Posterior vena cava (tissue), 2 donors: ENCODE measurements at regions of chr17 and their contacts with region 1.

Region 1: GRCh38 chr17:36894925-36895324 is 42.4 kb upstream of the LHX1 start:
- DNase-seq: no peak

Region 2: DNA sequence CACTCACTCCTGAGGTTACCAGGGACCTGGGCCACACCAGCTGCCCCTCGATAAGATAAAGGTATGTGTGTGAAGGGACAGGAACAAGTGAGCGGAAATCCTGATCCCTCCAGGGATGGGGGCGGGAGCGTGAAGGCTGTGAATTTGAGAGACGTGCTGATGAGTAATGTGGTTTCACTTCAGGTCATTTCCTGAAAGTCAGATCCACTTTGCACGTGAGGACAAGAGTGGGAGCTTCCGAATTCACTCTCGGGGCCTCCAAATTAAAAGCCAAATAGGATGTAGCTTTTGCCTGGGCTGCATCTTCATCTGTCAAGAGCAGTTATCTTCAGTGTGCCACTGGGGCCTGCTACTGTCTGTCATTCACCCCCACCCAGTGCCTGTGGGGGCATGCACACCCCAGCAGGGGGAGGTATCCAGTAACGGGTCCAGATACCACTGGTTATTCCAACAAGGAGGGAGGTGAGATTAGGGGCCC is 45.0 kb before region 1 on chr17:
- intact Hi-C with region 1: no loop called
- DNase-seq: peak; percentile 71

Region 3: DNA sequence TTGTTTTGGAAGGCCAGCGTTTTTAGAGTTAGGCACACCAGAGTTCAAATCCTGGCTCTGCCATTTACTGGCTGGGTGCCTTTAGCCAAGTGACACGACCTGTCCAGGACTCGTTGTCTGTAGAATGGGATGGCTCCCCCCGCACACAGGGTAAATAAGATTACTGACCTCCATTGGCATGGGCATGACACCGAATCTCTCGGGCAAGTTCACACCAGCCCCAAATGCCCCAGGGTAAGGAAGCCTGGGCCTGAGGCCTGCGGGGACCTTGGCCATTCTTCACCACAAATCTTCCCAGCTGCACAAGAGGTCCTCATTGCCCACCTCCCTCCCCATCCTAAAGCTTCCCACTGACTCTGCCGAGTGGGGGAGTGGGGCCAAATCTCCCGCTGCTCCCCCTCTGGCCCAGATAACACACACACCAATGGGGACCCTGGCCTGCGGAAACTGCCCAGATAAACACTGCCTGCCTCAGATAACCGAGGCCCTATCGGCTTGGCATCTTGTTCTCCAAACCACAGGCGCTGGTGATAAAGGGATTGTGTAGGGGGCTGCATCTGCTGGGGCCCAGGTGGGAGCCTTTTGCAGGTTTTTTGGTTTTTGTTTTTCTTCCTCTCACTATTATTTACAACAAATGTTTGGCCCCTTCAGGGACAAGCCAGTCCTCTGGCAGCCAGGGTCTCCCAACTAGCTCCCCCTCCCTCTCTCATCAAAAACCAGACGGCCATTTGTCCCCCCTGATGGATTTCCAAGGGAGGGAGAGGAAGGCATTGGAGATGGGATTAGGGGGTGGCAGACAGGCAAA is 32.6 kb before region 1 on chr17:
- intact Hi-C with region 1: no loop called
- DNase-seq: no peak

Region 4: DNA sequence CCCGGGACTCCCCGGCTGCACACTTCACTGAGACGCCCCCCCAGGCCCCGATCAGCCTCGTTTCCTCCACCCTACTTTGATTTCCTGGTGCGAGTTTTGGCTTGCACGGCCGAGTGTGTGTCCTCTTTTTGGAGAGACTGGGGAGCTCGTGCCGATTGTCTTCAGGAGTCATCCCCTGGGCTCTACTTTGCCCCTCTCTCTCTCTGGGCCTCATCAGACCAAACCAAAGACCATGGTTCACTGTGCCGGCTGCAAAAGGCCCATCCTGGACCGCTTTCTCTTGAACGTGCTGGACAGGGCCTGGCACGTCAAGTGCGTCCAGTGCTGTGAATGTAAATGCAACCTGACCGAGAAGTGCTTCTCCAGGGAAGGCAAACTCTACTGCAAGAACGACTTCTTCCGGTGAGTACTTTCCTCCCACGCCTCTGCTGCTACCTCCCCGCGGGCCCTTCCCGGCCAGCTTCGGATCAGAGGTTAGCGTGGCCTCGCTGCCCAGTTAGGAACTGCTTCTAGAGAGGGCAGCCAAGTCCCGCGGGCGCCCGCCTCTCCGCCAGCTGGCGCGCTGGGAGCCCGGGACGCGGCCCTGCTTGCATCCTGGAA is 43.1 kb after region 1 on chr17:
- intact Hi-C with region 1: loop called in 1 of 2 experiments (anchors 1 kb)
- DNase-seq: no peak

Region 5: GRCh38 chr17:38881600-38882191 is 1986.8 kb after region 1 on chr17:
- intact Hi-C with region 1: no loop called
- DNase-seq: peak; percentile 90